Activated naive CD4-positive, alpha-beta T cell treated with anti-CD3 and anti-CD28 coated beads, Interleukin-2, amount 10 ng/mL, durations not matched to agents 7 days and 5 days (primary cell): ENCODE measurements at regions of chr12 and their contacts with region 1.

Region 1: GRCh38 chr12:48165094-48165981 is 8.0 kb upstream of the ASB8 start:
- DNase-seq: peak; percentile 69
- H3K4me3 Mint-ChIP-seq: no peak overlapping the region
- H3K27ac Mint-ChIP-seq: no peak overlapping the region
- H3K4me1 Mint-ChIP-seq: peaks cover 5% of the 10 kb centered on the region
- H3K27me3 Mint-ChIP-seq: peaks cover 25% of the 10 kb centered on the region

Region 2: DNA sequence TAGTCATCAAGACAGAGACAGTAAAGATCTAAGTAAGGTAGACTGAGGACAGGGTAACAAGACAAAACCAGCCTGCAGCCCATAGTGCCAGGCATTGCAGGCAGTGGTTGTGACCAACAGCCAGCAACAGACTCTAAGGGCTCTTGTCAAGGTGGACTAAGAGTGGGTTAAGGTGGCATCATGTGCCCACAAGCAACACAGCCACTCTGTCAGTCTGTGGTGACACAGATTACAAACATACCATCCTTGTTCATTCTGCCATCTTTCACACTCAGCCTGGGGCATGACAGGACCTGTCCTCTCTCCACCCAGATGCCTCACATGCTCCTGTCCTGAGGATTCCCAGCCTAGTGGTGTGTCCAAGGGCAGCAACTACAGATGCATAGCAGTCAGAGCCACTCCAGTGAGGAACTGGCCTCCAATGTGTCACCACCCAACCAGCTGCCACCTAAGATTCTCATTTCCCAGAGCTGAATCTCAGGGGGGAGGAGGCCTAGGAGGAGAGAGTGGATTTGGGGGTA is 288.8 kb before region 1 on chr12:
- CTCF ChIA-PET with region 1: no interaction called
- DNase-seq: no peak
- H3K4me3 Mint-ChIP-seq: no peak overlapping the region
- H3K27ac Mint-ChIP-seq: no peak overlapping the region
- H3K4me1 Mint-ChIP-seq: peaks cover 14% of the 10 kb centered on the region
- H3K27me3 Mint-ChIP-seq: no peaks in the 10 kb centered on the region

Region 3: GRCh38 chr12:48189331-48190125 is 24.2 kb after region 1 on chr12:
- CTCF ChIA-PET with region 1: interaction called, 10 read pairs
- DNase-seq: peak; percentile 83
- H3K4me3 Mint-ChIP-seq: no peak overlapping the region
- H3K27ac Mint-ChIP-seq: no peak overlapping the region
- H3K4me1 Mint-ChIP-seq: peaks cover 2% of the 10 kb centered on the region
- H3K27me3 Mint-ChIP-seq: peaks cover 58% of the 10 kb centered on the region

Region 4: GRCh38 chr12:48202766-48203165 is 37.4 kb after region 1 on chr12:
- CTCF ChIA-PET with region 1: no interaction called
- DNase-seq: no peak
- H3K4me3 Mint-ChIP-seq: no peak overlapping the region
- H3K27ac Mint-ChIP-seq: no peak overlapping the region
- H3K4me1 Mint-ChIP-seq: peaks cover 36% of the 10 kb centered on the region
- H3K27me3 Mint-ChIP-seq: no peaks in the 10 kb centered on the region

Region 5: DNA sequence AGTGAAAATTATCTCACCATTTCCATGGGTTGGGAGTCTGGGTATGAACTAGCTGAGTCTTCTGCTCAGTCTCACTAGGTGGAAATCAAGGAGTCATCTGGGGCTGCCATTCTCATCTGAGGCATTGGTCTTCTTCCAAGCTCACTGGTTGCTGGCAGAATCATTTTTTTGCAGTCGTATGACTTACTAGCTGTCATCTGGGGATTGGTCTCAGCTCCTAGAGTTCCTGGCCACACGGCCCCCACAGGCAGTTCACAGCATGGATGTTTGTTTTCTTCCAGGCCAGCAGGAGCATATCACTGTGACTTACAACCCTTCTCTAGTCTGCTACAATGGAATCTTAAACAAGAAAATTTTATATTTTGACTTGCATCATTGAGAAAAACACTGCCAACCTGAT is 56.3 kb after region 1 on chr12:
- CTCF ChIA-PET with region 1: no interaction called
- DNase-seq: no peak
- H3K4me3 Mint-ChIP-seq: no peak overlapping the region
- H3K27ac Mint-ChIP-seq: no peak overlapping the region
- H3K4me1 Mint-ChIP-seq: peaks cover 3% of the 10 kb centered on the region
- H3K27me3 Mint-ChIP-seq: peaks cover 18% of the 10 kb centered on the region